Posterior vena cava (tissue), 2 donors: ENCODE measurements at regions of chr22 and their contacts with region 1.

Region 1: DNA sequence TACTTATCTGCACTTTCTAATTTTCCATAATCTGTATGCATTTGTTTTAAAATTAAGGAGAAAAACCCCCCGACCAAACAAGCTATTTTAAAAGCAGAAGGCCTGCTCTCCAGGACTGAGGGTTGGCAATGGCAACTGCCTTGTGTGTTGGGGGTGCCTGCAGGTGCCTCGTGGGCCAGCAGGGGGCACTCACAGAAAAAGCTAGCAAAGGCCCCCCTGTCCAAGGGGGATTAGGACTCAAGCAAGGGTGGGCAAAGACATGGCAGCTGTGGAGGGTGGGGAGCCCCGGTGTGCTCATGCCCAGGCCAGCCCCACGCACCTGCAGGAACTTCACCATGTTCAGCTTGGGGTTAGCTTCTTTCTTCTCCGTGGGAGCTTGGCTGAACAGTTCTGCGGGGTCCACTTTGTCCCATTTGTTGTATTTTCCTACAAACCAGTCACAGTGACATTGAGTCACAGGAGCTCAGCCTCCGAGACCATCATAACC is 10.3 kb downstream of the TOP3B start:
- DNase-seq: no peak

Region 2: GRCh38 chr22:23414727-23415431 is 1442.5 kb after region 1 on chr22:
- intact Hi-C with region 1: loop called in 1 of 2 experiments (anchors 5 kb)
- DNase-seq: peak; percentile 76